Mammary epithelial cell (primary cell): ENCODE measurements at regions of chr7 and their contacts with region 1.

Region 1: GRCh38 chr7:155815332-155816191 is 3.3 kb upstream of the SHH start:
- DNase-seq: peak; percentile 42
- H3K4me3 ChIP-seq: no peak overlapping the region
- H3K27ac ChIP-seq: no peak overlapping the region
- H3K4me1 ChIP-seq: peaks cover 13% of the 10 kb centered on the region
- H3K27me3 ChIP-seq: peaks cover 28% of the 10 kb centered on the region
- CTCF ChIP-seq: peak; percentile 65 to 91

Region 2: GRCh38 chr7:156156734-156157610 is 341.4 kb after region 1 on chr7:
- CTCF ChIA-PET with region 1: no interaction called
- dilution Hi-C with region 1: no loop called
- in situ Hi-C with region 1: no loop called
- intact Hi-C with region 1: loop called (anchors 5 kb)
- DNase-seq: no peak
- H3K4me3 ChIP-seq: no peak overlapping the region
- H3K27ac ChIP-seq: no peak overlapping the region
- H3K4me1 ChIP-seq: no peaks in the 10 kb centered on the region
- H3K27me3 ChIP-seq: no peaks in the 10 kb centered on the region
- CTCF ChIP-seq: peak; percentile 5 to 27

Region 3: DNA sequence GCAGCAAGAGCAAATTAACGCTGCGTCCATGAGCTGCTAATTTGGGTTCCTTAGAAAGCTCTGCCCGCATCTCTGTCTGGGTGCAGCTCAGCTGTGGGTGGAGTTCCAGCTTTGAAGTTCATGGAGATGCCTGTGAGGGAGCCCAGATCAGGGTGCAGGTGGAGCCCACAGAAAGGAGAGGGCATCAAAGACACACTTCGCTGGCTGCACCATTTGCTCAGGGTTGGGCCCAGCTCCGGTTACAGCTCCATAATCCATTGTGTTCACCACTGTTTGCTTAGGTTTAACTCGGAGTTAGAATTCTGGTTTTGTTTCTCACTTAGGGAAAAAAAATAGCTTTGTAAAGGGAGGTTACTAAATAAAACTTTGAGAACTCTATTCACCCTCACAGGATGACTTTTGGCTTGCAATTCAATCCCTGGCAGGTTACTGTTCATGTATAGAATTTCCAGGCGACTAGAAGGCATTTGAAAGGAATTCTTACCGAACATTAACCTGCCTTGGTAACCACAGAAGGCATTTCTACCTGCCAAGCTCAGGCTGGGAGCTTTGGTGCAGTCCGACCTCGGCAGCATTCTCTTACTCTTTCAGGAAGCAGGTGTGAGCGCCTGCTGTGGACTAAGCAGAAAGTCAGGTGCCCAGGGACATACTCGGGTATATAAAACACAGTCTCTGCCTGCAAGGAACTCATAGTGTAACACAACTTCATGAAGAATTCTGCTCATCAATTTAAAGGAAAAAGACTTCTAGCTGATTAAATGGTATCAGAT is 645.5 kb after region 1 on chr7:
- CTCF ChIA-PET with region 1: no interaction called
- dilution Hi-C with region 1: no loop called
- in situ Hi-C with region 1: loop called (anchors 10 to 25 kb)
- intact Hi-C with region 1: no loop called
- DNase-seq: no peak
- H3K4me3 ChIP-seq: no peak overlapping the region
- H3K27ac ChIP-seq: no peak overlapping the region
- H3K4me1 ChIP-seq: no peaks in the 10 kb centered on the region
- H3K27me3 ChIP-seq: no peaks in the 10 kb centered on the region
- CTCF ChIP-seq: no peak

Region 4: DNA sequence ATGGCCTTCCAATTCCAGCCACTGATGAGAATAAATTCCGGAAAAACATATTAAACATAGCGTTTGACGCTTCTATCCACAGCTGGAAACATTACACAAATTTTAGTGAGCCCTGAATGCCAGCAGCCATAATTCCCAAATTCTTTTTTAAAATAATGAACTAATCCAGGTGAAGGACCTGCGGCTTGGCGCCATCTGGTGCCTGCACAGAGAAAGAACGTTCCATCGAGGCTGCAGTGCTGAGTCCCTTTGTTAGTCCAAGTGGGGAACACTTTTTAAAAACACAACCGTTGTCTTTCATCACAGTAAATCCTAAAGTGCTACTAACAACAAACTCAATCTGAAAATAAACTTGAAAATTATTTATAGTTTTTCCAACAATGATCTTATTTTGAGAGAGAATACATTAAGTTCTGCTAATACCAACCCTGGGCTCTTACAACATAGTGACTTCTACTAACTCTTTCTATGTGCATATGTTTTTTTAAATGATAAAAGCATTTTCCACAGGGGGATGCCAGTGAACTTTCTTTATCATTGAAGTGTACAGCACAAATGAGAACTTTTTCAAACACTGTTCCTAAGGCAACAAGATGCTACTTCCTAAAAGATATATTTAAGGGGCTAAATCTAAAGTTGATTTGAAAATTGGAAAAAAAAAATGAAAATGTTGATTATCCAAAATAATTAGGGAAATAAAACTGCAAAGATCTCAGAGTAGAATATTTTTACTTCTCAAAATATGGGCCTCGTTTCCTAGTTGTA is 658.1 kb after region 1 on chr7:
- CTCF ChIA-PET with region 1: interaction called, 6 read pairs
- dilution Hi-C with region 1: no loop called
- in situ Hi-C with region 1: loop called (anchors 10 to 25 kb)
- intact Hi-C with region 1: loop called (anchors 1 kb)
- DNase-seq: no peak
- H3K4me3 ChIP-seq: no peak overlapping the region
- H3K27ac ChIP-seq: no peak overlapping the region
- H3K4me1 ChIP-seq: no peaks in the 10 kb centered on the region
- H3K27me3 ChIP-seq: no peaks in the 10 kb centered on the region
- CTCF ChIP-seq: peak; percentile 52 to 83

Region 5: GRCh38 chr7:156640257-156640948 is 824.8 kb after region 1 on chr7 and contains the start of gene RNF32:
- CTCF ChIA-PET with region 1: no interaction called
- dilution Hi-C with region 1: no loop called
- in situ Hi-C with region 1: loop called in 1 of 2 experiments (anchors 25 kb)
- intact Hi-C with region 1: loop called (anchors 10 kb)
- DNase-seq: peak; percentile 90
- H3K4me3 ChIP-seq: peak within 1 kb of the TSS; percentile 78 to 92 (median 85)
- H3K27ac ChIP-seq: peak within 1 kb of the TSS; percentile 97
- H3K4me1 ChIP-seq: peaks cover 15% of the 10 kb centered on the region
- H3K27me3 ChIP-seq: no peaks in the 10 kb centered on the region
- CTCF ChIP-seq: no peak
- total RNA-seq, gene RNF32: 0.96 to 1.0 TPM

Region 6: DNA sequence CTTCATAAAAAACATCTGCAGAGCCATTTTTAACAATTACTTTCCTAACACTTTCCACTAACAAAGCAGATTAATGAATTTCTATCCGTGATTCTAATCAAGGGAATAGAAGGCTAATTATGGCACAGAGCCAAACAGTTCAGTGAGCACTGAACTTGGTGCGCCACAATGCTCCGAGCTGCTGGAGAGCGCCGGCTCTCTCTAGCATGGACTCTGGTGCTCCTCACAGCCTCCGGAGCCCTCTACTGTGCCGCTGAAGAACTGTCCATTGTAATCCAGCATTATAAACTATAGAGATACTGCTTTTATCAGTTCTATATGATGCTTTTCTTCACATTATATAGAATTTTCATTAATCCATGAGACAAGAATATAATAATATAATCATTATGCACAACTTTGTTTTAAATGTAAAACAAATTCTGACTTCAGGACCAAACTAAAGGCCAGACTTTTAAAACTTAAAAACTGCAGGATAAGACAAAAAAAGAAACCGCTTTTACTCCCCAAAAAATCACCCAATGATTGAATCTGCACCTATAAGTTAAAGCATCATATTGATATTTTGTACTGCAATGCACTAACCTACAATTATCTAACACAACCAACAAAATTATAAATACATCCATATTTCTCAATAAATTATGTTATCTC is 948.6 kb after region 1 on chr7:
- CTCF ChIA-PET with region 1: no interaction called
- dilution Hi-C with region 1: no loop called
- in situ Hi-C with region 1: no loop called
- intact Hi-C with region 1: loop called (anchors 1 kb)
- DNase-seq: peak; percentile 58
- H3K4me3 ChIP-seq: no peak overlapping the region
- H3K27ac ChIP-seq: no peak overlapping the region
- H3K4me1 ChIP-seq: no peaks in the 10 kb centered on the region
- H3K27me3 ChIP-seq: no peaks in the 10 kb centered on the region
- CTCF ChIP-seq: peak; percentile 61 to 79

Region 7: GRCh38 chr7:156816943-156817572 is 1001.5 kb after region 1 on chr7:
- CTCF ChIA-PET with region 1: no interaction called
- dilution Hi-C with region 1: no loop called
- in situ Hi-C with region 1: loop called in 1 of 2 experiments (anchors 25 kb)
- intact Hi-C with region 1: no loop called
- DNase-seq: no peak
- H3K4me3 ChIP-seq: no peak overlapping the region
- H3K27ac ChIP-seq: no peak overlapping the region
- H3K4me1 ChIP-seq: no peaks in the 10 kb centered on the region
- H3K27me3 ChIP-seq: no peaks in the 10 kb centered on the region
- CTCF ChIP-seq: peak; percentile 24 to 48